ENCODE measurements at regions of chr4 and their contacts with region 1.

Region 1: DNA sequence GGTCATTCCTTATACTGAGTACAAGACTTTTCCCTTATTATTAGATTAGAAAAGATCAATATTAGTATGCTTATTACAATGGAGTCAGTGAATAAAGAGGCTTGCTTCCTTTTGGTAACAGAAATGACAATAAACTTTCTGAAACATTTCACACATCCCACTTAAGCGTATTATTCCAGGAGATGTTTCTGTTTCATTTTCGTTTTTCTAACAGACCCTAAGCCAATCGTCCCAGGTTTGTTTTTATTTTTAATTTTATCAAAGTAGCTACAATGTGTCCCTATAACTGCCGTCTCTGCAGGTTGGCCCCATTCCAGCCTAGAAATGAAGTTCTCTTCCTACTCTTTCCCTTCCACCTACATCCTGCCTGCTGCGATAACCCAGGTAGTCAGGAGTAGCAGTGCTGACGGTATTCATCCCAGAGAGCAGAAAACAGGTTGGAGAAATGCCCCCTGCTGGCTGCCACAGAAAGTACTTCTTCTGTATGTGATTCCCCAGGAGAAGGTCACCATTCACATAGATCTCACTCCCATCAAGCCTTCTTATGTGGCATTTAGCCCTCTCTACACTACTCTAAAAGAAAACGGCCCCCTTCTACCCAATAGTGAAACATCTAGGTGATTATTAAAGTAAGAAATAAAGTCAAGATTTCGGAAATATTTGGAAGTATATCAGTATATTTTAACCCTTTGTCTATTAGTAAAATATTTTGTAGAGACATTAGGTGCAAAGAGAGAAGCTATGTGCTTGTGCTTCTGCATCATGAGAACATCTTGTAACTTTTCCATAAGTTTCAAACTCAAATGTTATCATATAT is 40.4 kb downstream of the ENPEP start:
- DNase-seq: peak; percentile 86
- H3K4me3 ChIP-seq: peak overlapping the region; percentile 56 to 95 (median 79)
- H3K27ac ChIP-seq: peak overlapping the region; percentile 49
- H3K4me1 ChIP-seq: peaks cover 10% of the 10 kb centered on the region
- H3K27me3 ChIP-seq: peaks cover 0 to 4% of the 10 kb centered on the region in 2 experiments
- CTCF ChIP-seq: peak; percentile 80 to 82
- POLR2A ChIP-seq: no peak

Region 2: GRCh38 chr4:109424093-109424841 is 1092.0 kb before region 1 on chr4:
- CTCF ChIA-PET with region 1: no interaction called
- POLR2A ChIA-PET with region 1: no interaction called
- dilution Hi-C with region 1: no loop called
- intact Hi-C with region 1: loop called (anchors 2 kb)
- DNase-seq: no peak
- H3K4me3 ChIP-seq: no peak overlapping the region
- H3K27ac ChIP-seq: no peak overlapping the region
- H3K4me1 ChIP-seq: peaks cover 14% of the 10 kb centered on the region
- H3K27me3 ChIP-seq: no peaks in the 10 kb centered on the region
- CTCF ChIP-seq: no peak
- POLR2A ChIP-seq: no peak

Region 3: DNA sequence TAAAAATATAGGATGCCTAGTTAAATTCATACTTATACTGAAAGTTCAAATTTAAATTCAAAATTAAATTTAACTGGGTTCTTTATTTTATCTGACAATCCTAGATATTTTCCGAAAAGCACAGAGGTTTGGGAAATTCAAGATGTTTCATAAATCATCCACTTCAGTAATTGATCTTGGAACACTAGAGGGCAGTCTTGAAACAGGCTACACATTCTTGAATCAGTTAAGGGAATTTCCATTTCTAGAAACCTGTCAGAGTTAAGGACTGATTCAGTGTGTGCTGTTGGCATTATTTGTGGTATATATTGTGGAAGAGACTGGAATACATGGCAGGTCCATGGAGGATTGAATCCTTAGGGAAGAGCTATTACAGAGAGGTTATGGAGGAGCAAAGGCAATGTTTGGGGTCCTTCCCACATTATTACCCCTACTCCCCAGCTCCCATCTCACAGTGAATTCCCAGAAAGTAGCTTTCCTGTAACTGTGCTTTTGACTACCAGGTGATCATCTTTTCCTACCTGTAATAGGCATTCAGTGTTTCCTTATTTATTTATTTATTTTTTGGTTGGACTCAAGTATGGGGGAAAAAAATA is 510.8 kb before region 1 on chr4:
- CTCF ChIA-PET with region 1: interaction called, 527 read pairs
- POLR2A ChIA-PET with region 1: no interaction called
- dilution Hi-C with region 1: no loop called
- intact Hi-C with region 1: loop called (anchors 1 kb)
- DNase-seq: peak; percentile 62
- H3K4me3 ChIP-seq: no peak overlapping the region
- H3K27ac ChIP-seq: no peak overlapping the region
- H3K4me1 ChIP-seq: no peaks in the 10 kb centered on the region
- H3K27me3 ChIP-seq: peaks cover 7 to 10% of the 10 kb centered on the region in 2 experiments
- CTCF ChIP-seq: peak; percentile 46 to 52
- POLR2A ChIP-seq: no peak

Region 4: GRCh38 chr4:110196206-110196870 is 320.0 kb before region 1 on chr4:
- CTCF ChIA-PET with region 1: no interaction called
- POLR2A ChIA-PET with region 1: no interaction called
- dilution Hi-C with region 1: no loop called
- intact Hi-C with region 1: loop called (anchors 5 kb)
- DNase-seq: peak; percentile 55
- H3K4me3 ChIP-seq: peak overlapping the region; percentile 78 to 95 (median 91)
- H3K27ac ChIP-seq: peak overlapping the region; percentile 46
- H3K4me1 ChIP-seq: peaks cover 23% of the 10 kb centered on the region
- H3K27me3 ChIP-seq: no peaks in the 10 kb centered on the region
- CTCF ChIP-seq: no peak
- POLR2A ChIP-seq: peak; percentile 20

Region 5: DNA sequence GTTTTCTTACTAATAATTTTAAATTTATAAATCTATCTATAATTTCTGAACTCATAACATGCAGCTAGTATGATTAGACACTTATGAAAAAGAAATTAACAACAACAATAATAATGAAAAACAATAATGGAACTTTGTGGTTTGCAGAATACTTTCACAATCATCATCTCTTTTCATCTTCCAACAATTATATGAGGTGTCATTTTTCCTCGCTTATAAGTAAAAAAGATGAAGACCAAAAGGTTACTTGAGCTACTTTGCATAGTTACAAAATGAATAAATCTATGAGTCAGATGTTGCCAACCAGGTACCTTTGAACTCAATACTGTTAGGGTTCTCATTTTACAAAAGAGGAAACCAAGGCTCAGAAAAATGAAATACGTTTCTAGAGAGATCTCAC is 219.4 kb before region 1 on chr4:
- CTCF ChIA-PET with region 1: no interaction called
- POLR2A ChIA-PET with region 1: no interaction called
- dilution Hi-C with region 1: no loop called
- intact Hi-C with region 1: no loop called
- DNase-seq: no peak
- H3K4me3 ChIP-seq: no peak overlapping the region
- H3K27ac ChIP-seq: no peak overlapping the region
- H3K4me1 ChIP-seq: no peaks in the 10 kb centered on the region
- H3K27me3 ChIP-seq: peaks cover 0 to 3% of the 10 kb centered on the region in 2 experiments
- CTCF ChIP-seq: no peak
- POLR2A ChIP-seq: no peak

Region 6: DNA sequence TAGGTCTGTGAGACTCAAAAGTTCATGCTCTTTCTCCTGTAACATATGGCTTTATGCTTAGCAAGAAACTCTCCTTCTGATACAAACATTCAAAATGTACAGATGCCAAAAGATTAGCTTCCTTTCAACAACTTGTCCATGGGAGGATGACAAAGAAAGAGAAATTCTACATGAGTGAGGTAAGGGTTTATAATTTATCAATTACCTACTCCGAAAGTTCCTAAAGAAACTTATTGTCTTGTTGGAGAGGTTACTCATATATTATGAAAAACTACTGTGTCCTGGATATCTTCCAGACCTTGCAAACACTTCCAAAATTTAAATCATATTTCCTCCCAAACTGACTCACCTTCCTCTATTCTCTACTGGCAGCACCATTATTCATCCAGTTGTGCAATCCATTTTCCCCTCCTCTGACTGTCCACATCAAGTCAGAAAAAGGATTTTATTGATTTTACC is 24.7 kb after region 1 on chr4:
- CTCF ChIA-PET with region 1: interaction called, 9 read pairs
- POLR2A ChIA-PET with region 1: no interaction called
- dilution Hi-C with region 1: no loop called
- intact Hi-C with region 1: loop called (anchors 1 kb)
- DNase-seq: peak; percentile 94
- H3K4me3 ChIP-seq: peak overlapping the region in 1 of 3 experiments; percentile 23
- H3K27ac ChIP-seq: peak overlapping the region; percentile 99
- H3K4me1 ChIP-seq: peaks cover 25% of the 10 kb centered on the region
- H3K27me3 ChIP-seq: no peaks in the 10 kb centered on the region
- CTCF ChIP-seq: no peak
- POLR2A ChIP-seq: no peak

Measured in endothelial cell of umbilical vein (primary cell).